Heart right ventricle (tissue), 16 donors: ENCODE measurements at regions of chr1 and their contacts with region 1.

Region 1: GRCh38 chr1:168824418-168824817 is 95.4 kb upstream of the DPT start:
- DNase-seq: no peak
- ATAC-seq: peak in 6 of 8 donors; percentile 27 to 69 (median 47)
- H3K4me3 ChIP-seq: no peak overlapping the region
- H3K27ac ChIP-seq: peak overlapping the region in 4 of 10 donors; percentile 13 to 54 (median 42)
- H3K4me1 ChIP-seq: peaks cover 0 to 22% (median 12%) of the 10 kb centered on the region in 9 donors
- H3K27me3 ChIP-seq: no peaks in the 10 kb centered on the region
- CTCF ChIP-seq: no peak

Region 2: DNA sequence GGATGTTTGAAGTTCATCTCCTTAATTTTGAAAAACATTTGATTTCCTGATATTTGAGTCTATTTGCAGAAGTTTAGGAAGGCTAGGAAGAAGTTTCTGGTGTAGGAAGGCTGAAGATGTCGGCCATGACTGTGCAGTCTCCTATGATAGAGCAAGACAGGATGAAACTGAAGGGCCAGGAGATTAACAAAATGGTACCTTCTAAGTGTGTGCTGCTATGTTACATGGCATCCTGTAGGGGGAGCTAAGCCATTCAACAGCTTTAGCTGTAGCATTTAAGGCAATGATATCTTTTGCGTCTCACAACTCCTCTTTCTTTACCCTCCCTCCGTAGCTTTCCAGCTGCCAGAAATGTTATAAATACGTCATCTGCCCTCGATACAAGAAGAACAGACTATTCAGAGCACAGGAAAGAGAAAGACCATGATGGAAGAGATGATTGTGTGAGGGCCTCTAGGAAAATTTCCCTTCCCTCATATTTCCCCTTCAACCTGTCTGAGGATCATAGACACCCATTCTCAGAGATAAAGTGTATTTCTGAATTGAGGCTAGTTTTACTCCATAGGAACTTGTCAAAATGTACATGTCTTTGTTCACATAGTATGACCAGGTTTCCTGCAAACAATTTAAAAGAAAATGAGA is 186.9 kb before region 1 on chr1:
- intact Hi-C with region 1: loop called in 1 of 10 experiments (anchors 10 kb)
- DNase-seq: no peak
- ATAC-seq: peak in 7 of 8 donors; percentile 29 to 65 (median 47)
- H3K4me3 ChIP-seq: no peak overlapping the region
- H3K27ac ChIP-seq: peak overlapping the region in 8 of 10 donors; percentile 36 to 66 (median 48)
- H3K4me1 ChIP-seq: peaks cover 0 to 14% (median 0%) of the 10 kb centered on the region in 9 donors
- H3K27me3 ChIP-seq: no peaks in the 10 kb centered on the region
- CTCF ChIP-seq: peak; percentile 36 to 69 (median 58)

Region 3: GRCh38 chr1:168734946-168735345 is 89.5 kb before region 1 on chr1:
- intact Hi-C with region 1: loop called in 1 of 10 experiments (anchors 10 kb)
- DNase-seq: no peak
- ATAC-seq: peak in 2 of 8 donors; percentile 50 to 62
- H3K4me3 ChIP-seq: no peak overlapping the region
- H3K27ac ChIP-seq: peak overlapping the region in 2 of 10 donors; percentile 16 to 25
- H3K4me1 ChIP-seq: peaks cover 2 to 25% (median 16%) of the 10 kb centered on the region in 9 donors
- H3K27me3 ChIP-seq: no peaks in the 10 kb centered on the region
- CTCF ChIP-seq: peak in 6 of 9 donors; percentile 13 to 36 (median 26)

Region 4: GRCh38 chr1:168774241-168774640 is 50.2 kb before region 1 on chr1:
- intact Hi-C with region 1: loop called in 1 of 10 experiments (anchors 5 kb)
- DNase-seq: peak; percentile 56
- ATAC-seq: peak; percentile 93 to 100 (median 97)
- H3K4me3 ChIP-seq: no peak overlapping the region
- H3K27ac ChIP-seq: peak overlapping the region in 3 of 10 donors; percentile 0 to 30 (median 22)
- H3K4me1 ChIP-seq: peaks cover 0 to 25% (median 5%) of the 10 kb centered on the region in 9 donors
- H3K27me3 ChIP-seq: no peaks in the 10 kb centered on the region
- CTCF ChIP-seq: no peak

Region 5: GRCh38 chr1:169207797-169208520 is 383.5 kb after region 1 on chr1:
- intact Hi-C with region 1: no loop called
- DNase-seq: no peak
- ATAC-seq: no peak
- H3K4me3 ChIP-seq: no peak overlapping the region
- H3K27ac ChIP-seq: no peak overlapping the region
- H3K4me1 ChIP-seq: peaks cover 0 to 3% (median 0%) of the 10 kb centered on the region in 9 donors
- H3K27me3 ChIP-seq: no peaks in the 10 kb centered on the region
- CTCF ChIP-seq: no peak